ENCODE measurements at regions of chr3 and their contacts with region 1.

Region 1: DNA sequence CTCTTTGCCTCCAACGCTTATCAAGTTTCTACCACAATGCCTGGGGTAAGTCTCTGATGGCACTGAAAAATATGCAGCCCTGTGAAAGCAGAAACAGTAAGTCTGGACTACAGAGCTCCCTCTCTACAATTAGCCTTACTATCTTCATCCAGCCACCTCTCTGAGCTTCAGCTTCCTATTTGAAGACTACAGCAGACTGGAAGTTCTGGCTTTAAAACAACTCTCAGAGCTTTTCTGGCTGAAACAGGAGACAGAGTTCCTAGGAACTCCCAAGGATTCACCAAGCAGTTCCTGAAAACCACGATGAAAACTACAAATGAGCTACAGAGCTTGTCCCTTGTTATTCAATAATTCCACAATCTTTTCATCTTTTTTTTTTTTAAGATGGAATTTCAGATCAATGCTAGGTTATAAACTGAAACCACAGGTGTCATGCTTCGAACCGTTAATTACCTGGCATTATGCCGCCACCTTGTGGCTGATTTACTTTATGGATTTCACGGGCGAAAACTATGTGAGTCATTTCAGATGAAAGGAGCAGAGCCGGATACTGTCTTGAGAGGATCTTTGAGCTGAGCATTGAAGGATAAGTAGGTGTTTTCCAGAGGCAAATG is 3.9 kb downstream of the CRYGS start:
- DNase-seq: no peak
- ATAC-seq: peak; percentile 83

Region 2: DNA sequence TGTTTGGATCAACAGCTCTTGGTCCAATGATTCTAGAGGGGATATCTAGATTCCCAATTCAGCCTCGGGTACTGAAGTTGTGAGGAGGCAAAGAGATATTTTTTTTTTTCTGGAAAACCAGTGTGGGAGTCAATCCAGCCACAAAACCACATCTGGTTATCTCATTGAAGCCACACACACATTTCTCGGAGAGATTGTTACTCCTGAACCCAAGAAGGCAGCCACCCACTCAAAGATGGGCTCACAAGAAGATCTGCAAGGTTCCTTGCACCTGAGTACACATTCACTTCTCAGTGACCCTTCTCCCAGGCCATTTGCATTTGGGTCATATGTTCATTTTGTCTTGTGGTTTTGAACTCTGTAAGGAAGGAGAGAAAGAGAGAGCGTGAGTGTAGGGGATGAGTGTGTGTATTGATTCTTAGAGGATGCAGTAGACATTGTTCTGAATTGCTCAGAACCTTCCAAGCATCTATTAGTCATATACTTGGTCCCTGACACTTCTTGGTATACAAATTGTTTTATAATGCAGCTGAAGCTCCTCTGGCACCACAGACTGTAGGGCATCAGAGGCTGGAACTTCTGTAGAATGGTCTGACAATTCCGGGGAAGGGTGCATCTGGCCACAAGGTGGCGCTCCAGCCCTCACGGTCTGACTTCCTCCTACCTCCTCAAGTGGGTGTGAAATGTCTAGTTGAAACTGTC is 563.2 kb before region 1 on chr3:
- intact Hi-C with region 1: loop called (anchors 10 kb)
- DNase-seq: peak; percentile 90
- ATAC-seq: peak; percentile 77

Region 3: GRCh38 chr3:186259612-186260383 is 280.5 kb before region 1 on chr3:
- intact Hi-C with region 1: loop called (anchors 10 kb)
- DNase-seq: peak; percentile 79
- ATAC-seq: peak; percentile 90

Measured in left ventricle myocardium superior (tissue), 1 donor.